ENCODE measurements at regions of chr5 and their contacts with region 1.

Region 1: DNA sequence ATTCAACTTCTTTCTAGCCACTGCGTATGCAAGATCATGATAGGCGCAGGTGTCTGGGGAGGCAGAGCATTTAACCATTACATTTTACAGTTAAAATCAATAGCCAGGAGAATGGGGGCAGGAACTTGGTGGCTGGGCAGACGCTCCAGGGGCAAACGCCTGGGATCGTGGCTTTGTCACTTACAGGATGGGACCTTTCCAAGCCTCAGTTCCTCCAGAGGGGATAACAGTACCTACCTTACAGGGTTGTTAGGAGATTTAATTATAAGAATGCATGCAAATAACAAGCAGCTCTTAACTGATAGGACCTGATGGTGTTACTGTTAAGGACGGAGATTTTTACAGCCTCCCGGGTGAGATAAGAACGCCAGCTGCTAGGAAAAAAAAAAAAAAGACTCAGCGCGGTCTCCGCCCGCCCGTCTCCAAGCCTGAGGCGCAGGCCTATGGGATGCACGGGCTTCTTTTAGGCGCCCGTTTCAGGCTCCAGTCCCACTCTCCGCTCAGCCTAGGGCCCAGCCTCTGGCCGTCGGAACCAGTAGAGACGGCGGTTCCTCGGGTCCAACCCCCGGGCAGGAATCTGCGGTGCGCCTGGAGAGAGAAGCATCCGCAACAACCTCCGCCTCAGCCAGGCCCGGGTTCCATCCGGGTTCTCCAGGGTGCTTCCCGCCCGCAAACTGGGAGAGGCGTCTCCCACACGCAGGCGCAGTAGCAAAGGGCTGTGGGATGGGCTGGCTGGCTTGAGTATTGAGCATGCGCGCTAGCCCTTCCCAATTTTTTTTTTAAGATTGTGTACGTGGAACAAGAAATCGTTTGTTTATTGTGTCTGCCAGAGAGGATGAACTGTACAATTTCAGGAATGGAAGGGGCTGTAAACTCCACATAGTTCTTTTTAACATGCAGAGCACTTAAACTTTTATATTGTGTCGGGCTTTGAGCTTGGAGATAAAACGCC is at the start of gene FAM200C:
- DNase-seq: peak; percentile 55
- ATAC-seq: peak; percentile 80
- H3K4me3 Mint-ChIP-seq: peak within 1 kb of the TSS; percentile 88
- H3K27ac Mint-ChIP-seq: peak within 1 kb of the TSS; percentile 59
- H3K4me1 Mint-ChIP-seq: peaks cover 10% of the 10 kb centered on the region
- H3K27me3 Mint-ChIP-seq: no peaks in the 10 kb centered on the region
- CTCF ChIP-seq: no peak
- total RNA-seq, gene FAM200C: 0.44 and 0.66 TPM in 2 replicates

Region 2: GRCh38 chr5:160369990-160370712 is 29.5 kb before region 1 on chr5 and contains the start of gene C1QTNF2:
- CTCF ChIA-PET with region 1: no interaction called
- POLR2A ChIA-PET with region 1: no interaction called
- intact Hi-C with region 1: loop called (anchors 2 kb)
- DNase-seq: no peak
- ATAC-seq: peak; percentile 28
- H3K4me3 Mint-ChIP-seq: peak within 1 kb of the TSS; percentile 81
- H3K27ac Mint-ChIP-seq: no peak within 1 kb of the TSS
- H3K4me1 Mint-ChIP-seq: peaks cover 17% of the 10 kb centered on the region
- H3K27me3 Mint-ChIP-seq: peaks cover 64% of the 10 kb centered on the region
- CTCF ChIP-seq: no peak
- total RNA-seq, gene C1QTNF2: not detected in 2 replicates

Region 3: GRCh38 chr5:160418561-160419457 is 19.1 kb after region 1 on chr5 and contains the start of gene SLU7:
- CTCF ChIA-PET with region 1: no interaction called
- POLR2A ChIA-PET with region 1: interaction called, 10 read pairs
- intact Hi-C with region 1: loop called (anchors 2 kb)
- DNase-seq: peak; percentile 88
- ATAC-seq: peak; percentile 81
- H3K4me3 Mint-ChIP-seq: peak within 1 kb of the TSS; percentile 91
- H3K27ac Mint-ChIP-seq: peak within 1 kb of the TSS; percentile 90
- H3K4me1 Mint-ChIP-seq: peaks cover 72% of the 10 kb centered on the region
- H3K27me3 Mint-ChIP-seq: no peaks in the 10 kb centered on the region
- CTCF ChIP-seq: no peak
- total RNA-seq, gene SLU7: 58.5 and 59.3 TPM in 2 replicates